Activated B cell treated with CpG ODN at 0.5 μM for 24 hours (primary cell): ENCODE measurements at regions of chr6 and their contacts with region 1.

Region 1: GRCh38 chr6:119110601-119111548 is 32.4 kb upstream of the FAM184A start:
- DNase-seq: no peak
- ATAC-seq: peak; percentile 42
- H3K4me3 Mint-ChIP-seq: no peak overlapping the region
- H3K27ac Mint-ChIP-seq: no peak overlapping the region
- H3K4me1 Mint-ChIP-seq: no peaks in the 10 kb centered on the region
- H3K27me3 Mint-ChIP-seq: peaks cover 3% of the 10 kb centered on the region
- CTCF ChIP-seq: no peak

Region 2: DNA sequence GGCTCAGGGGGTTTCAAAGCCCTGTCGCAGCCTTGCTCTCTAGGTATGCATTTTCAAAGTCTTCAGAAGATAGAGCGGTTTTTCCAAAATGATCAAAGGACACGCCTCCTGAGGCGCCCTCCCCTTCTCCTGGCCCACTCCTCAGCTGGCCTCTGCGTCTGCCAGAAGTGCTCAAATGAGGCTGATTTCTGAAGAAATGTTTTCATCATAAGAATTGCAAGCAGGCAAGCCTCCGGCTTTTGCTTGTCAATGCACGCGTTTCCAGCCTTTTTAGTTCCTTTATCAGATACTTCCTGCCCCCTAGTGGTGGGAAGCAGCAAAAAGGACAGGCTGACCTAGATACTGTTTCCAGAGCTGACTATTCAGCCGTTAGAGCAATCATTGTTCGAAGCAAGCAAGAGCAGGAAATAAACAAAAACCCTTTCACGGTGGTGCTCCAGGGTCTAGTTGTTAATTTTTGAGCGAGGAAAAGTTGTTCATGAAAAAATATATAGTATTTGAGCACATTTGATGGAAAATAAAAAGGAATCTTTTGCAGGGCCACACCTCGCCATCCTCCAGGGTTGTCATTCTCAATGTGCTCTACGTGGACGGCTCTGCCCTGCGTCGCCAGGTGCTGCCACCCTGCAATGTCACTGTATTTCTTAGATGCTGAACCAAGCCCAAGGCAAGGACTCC is 310.3 kb before region 1 on chr6:
- CTCF ChIA-PET with region 1: interaction called, 11 read pairs
- POLR2A ChIA-PET with region 1: no interaction called
- intact Hi-C with region 1: loop called (anchors 1 kb)
- DNase-seq: peak; percentile 34
- ATAC-seq: peak; percentile 91
- H3K4me3 Mint-ChIP-seq: peak overlapping the region; percentile 52
- H3K27ac Mint-ChIP-seq: no peak overlapping the region
- H3K4me1 Mint-ChIP-seq: peaks cover 25% of the 10 kb centered on the region
- H3K27me3 Mint-ChIP-seq: no peaks in the 10 kb centered on the region
- CTCF ChIP-seq: peak; percentile 25

Region 3: GRCh38 chr6:118963003-118963402 is 147.9 kb before region 1 on chr6:
- CTCF ChIA-PET with region 1: interaction called, 36 read pairs
- POLR2A ChIA-PET with region 1: no interaction called
- intact Hi-C with region 1: loop called (anchors 1 kb)
- DNase-seq: no peak
- ATAC-seq: no peak
- H3K4me3 Mint-ChIP-seq: no peak overlapping the region
- H3K27ac Mint-ChIP-seq: no peak overlapping the region
- H3K4me1 Mint-ChIP-seq: no peaks in the 10 kb centered on the region
- H3K27me3 Mint-ChIP-seq: no peaks in the 10 kb centered on the region
- CTCF ChIP-seq: no peak

Region 4: GRCh38 chr6:119612911-119613381 is 502.1 kb after region 1 on chr6:
- CTCF ChIA-PET with region 1: no interaction called
- POLR2A ChIA-PET with region 1: no interaction called
- intact Hi-C with region 1: no loop called
- DNase-seq: no peak
- ATAC-seq: no peak
- H3K4me3 Mint-ChIP-seq: no peak overlapping the region
- H3K27ac Mint-ChIP-seq: no peak overlapping the region
- H3K4me1 Mint-ChIP-seq: no peaks in the 10 kb centered on the region
- H3K27me3 Mint-ChIP-seq: no peaks in the 10 kb centered on the region
- CTCF ChIP-seq: no peak